Mammary epithelial cell (primary cell): ENCODE measurements at regions of chr2 and their contacts with region 1.

Region 1: DNA sequence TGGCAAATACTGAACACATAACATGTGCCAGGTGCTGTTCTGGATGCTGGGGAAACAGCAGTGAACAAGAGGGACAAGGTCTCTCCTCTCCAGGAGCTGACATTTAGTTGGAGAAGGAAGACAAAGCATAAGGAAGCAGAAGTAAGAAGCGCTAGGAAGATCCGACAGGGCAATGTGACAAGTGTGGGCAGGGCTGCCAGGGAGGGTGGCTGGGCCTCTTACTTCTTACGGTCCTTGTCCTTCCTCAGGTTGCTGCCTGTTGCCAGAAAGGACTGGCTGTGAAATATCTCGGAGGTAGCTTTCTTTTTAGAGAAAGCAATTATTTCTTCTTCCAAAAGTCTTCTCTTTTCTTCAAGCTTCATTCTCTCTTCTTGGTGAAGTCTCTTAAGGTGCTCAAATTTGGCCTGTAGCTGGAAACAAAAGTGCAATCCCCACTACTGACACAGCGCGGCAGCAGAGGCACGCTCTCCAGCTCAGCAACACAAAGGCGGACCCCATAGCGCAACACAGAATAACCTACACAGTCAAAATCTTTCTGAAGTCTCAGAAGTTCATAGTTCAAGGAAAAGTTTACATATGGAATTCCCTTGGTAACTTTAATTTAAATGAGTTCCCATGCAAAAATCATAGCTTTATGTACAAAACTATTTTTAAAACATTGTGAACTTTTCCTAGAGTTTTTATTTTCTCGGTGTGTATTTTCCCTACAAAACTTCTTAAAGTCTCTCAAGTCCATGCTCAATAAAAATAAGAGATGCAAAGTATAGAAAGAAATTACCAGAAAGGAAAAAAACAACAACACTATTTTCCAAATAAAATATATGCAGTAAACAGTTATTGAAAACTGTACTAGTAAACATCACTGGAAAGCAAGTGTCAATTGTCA is 67.7 kb downstream of the SEPTIN10 start:
- DNase-seq: peak; percentile 35
- H3K4me3 ChIP-seq: no peak overlapping the region
- H3K27ac ChIP-seq: no peak overlapping the region
- H3K4me1 ChIP-seq: no peaks in the 10 kb centered on the region
- H3K27me3 ChIP-seq: no peaks in the 10 kb centered on the region
- CTCF ChIP-seq: peak; percentile 94 to 96

Region 2: DNA sequence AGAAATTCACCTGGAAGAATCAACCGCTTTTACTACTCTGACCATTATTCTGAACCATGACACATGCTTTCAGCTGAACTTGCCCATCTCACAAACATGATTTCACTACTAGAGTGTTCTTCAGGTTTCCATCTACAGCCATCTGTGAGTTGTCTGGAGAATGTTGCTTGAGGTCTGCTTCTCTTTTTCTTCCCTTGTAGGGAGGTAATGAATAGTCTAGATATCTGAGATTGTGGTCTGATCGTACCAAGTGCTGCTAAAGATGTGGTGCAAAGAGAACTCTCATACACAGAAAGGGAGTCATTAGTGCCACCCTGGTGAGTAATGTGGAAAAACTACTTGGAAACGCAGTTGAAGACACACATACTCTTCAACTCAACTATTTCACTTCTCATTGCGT is 78.3 kb after region 1 on chr2:
- CTCF ChIA-PET with region 1: no interaction called
- dilution Hi-C with region 1: loop called (anchors 5 kb)
- in situ Hi-C with region 1: no loop called
- intact Hi-C with region 1: no loop called
- DNase-seq: no peak
- H3K4me3 ChIP-seq: no peak overlapping the region
- H3K27ac ChIP-seq: no peak overlapping the region
- H3K4me1 ChIP-seq: no peaks in the 10 kb centered on the region
- H3K27me3 ChIP-seq: no peaks in the 10 kb centered on the region
- CTCF ChIP-seq: no peak

Region 3: DNA sequence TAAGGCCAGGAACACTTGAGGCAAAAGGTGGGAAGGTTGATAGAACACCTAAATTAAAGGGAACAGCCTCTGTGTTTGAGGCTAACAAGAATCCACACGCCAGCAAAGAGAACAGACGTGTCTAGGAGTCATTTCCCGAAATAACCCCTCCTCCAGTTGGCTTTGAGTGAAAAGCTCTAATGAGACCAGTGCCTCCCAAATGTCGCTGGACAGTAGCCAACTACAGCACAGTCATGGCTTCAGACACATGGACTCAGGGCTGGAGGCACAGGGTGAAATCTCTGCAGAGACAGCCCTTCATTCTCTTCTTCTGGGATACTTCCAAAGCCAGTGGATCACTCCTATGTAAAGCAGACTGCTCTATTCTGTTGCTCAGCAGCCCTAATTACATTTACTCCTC is 117.7 kb after region 1 on chr2:
- CTCF ChIA-PET with region 1: interaction called, 24 read pairs
- dilution Hi-C with region 1: no loop called
- in situ Hi-C with region 1: no loop called
- intact Hi-C with region 1: loop called (anchors 5 kb)
- DNase-seq: peak; percentile 90
- H3K4me3 ChIP-seq: no peak overlapping the region
- H3K27ac ChIP-seq: no peak overlapping the region
- H3K4me1 ChIP-seq: peaks cover 9% of the 10 kb centered on the region
- H3K27me3 ChIP-seq: no peaks in the 10 kb centered on the region
- CTCF ChIP-seq: no peak

Region 4: GRCh38 chr2:109715313-109715805 is 169.3 kb after region 1 on chr2:
- CTCF ChIA-PET with region 1: interaction called, 9 read pairs
- dilution Hi-C with region 1: no loop called
- in situ Hi-C with region 1: loop called in 1 of 2 experiments (anchors 5 kb)
- intact Hi-C with region 1: loop called (anchors 5 kb)
- DNase-seq: peak; percentile 51
- H3K4me3 ChIP-seq: no peak overlapping the region
- H3K27ac ChIP-seq: no peak overlapping the region
- H3K4me1 ChIP-seq: no peaks in the 10 kb centered on the region
- H3K27me3 ChIP-seq: no peaks in the 10 kb centered on the region
- CTCF ChIP-seq: peak; percentile 67 to 94

Region 5: DNA sequence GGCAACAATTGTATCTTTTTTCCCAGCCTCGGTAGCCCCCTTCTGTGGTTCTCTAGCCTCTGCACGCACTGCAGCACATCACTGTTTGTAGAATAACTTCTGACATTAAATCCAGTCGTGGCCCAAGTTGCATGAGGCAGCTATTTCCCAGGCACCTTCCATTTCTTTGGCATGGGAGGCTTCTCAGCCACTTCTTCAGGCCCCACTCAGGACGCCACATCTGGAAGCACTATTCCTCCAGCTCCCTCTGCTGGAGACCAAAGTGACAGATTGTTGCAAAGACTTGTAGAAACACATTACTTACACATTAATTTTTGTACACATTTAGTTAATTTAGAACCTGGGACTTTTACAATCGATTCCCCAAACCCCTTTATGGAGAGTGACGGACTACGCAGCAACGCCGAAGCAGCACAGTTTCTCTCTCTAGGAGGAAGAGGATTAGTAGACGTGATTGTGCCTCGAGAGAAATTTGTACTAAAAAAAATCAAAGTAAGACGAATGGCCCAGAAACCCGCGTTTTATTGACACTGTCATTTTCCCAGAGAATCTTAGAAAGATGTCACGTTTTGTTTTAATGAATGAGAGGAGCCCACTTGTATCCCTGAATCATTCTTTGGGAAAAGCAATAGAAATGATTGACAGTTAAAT is 190.2 kb after region 1 on chr2:
- CTCF ChIA-PET with region 1: interaction called, 17 read pairs
- dilution Hi-C with region 1: no loop called
- in situ Hi-C with region 1: no loop called
- intact Hi-C with region 1: no loop called
- DNase-seq: peak; percentile 36
- H3K4me3 ChIP-seq: no peak overlapping the region
- H3K27ac ChIP-seq: no peak overlapping the region
- H3K4me1 ChIP-seq: no peaks in the 10 kb centered on the region
- H3K27me3 ChIP-seq: no peaks in the 10 kb centered on the region
- CTCF ChIP-seq: peak; percentile 57 to 73

Region 6: DNA sequence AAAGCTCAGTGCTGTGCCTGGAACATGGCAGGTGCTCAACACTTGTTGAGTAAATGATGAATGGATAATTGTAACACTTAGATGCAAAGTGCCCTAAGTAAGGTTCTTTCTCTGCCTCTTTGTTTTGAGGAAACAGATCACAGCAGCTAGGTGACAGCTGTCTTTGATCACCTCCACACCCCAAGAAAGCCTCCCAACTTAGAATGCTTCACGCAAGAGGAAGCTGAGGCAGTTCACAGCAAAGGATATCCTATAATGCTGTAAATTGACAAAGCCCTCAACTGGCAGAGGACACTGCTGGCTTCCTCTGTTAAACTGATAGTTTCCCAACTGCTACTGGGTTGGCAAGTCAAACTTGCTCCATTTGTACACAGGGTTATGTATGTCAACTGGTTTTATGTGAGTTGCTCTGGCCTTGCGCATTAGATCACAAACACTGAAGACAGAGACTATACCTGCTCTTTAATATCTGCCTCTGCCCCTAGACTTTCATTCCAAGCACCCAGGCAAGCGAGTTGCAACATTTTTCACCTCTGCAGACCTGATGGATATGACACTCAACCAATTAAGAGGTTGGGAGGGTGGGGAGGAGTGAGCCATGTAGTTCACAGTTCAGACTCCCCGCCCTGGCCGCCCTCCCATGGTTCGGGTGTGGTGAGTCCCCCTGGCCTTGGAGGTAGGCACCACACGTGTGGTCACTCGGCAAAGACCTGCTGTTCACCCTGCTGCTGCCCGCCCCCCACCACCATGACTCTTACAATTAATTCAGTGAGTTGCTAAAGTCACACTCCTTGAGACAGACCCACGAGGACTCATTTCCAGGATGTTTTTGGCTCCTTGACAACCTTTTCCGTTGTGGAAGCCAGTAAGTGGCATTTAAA is 574.3 kb after region 1 on chr2:
- CTCF ChIA-PET with region 1: no interaction called
- dilution Hi-C with region 1: no loop called
- in situ Hi-C with region 1: no loop called
- intact Hi-C with region 1: no loop called
- DNase-seq: no peak
- H3K4me3 ChIP-seq: no peak overlapping the region
- H3K27ac ChIP-seq: no peak overlapping the region
- H3K4me1 ChIP-seq: peaks cover 18% of the 10 kb centered on the region
- H3K27me3 ChIP-seq: no peaks in the 10 kb centered on the region
- CTCF ChIP-seq: no peak